ENCODE measurements at regions of chr9 and their contacts with region 1.

Region 1: DNA sequence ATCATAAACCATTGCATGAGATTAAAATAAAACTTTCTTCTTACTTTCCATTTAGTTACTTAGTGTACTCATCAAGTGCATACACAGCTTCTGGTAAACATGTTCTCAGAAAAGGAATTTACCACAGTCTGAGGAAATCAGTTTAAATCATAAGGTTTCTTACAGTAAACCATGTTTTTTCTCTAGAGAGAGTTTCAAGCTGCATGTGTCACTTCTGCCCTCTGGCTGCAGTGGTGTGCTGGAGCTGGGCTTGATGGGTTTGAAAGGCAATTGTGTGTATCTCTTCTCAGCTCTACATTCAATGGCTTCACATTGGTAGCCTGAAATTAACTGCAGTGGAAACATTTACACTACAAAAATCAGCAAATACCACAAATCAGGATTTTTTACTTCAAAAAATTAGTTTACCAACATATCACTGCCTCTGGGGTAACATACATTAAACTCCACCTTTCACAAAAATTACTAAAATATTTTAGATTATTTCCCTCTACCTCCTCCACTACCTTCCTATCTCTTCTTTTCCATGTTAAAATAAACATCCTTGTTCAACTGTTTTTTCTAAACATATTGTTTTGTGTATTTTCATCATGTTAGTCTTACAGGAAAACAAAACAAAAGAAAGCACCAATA is 414.3 kb downstream of the ANXA1 start:
- DNase-seq: no peak

Region 2: GRCh38 chr9:73200694-73201452 is 365.1 kb before region 1 on chr9:
- intact Hi-C with region 1: loop called (anchors 10 kb)
- DNase-seq: no peak

Region 3: GRCh38 chr9:73269430-73270101 is 296.4 kb before region 1 on chr9:
- intact Hi-C with region 1: loop called (anchors 5 kb)
- DNase-seq: no peak

Region 4: GRCh38 chr9:73280113-73280512 is 285.8 kb before region 1 on chr9:
- intact Hi-C with region 1: no loop called
- DNase-seq: no peak

Region 5: DNA sequence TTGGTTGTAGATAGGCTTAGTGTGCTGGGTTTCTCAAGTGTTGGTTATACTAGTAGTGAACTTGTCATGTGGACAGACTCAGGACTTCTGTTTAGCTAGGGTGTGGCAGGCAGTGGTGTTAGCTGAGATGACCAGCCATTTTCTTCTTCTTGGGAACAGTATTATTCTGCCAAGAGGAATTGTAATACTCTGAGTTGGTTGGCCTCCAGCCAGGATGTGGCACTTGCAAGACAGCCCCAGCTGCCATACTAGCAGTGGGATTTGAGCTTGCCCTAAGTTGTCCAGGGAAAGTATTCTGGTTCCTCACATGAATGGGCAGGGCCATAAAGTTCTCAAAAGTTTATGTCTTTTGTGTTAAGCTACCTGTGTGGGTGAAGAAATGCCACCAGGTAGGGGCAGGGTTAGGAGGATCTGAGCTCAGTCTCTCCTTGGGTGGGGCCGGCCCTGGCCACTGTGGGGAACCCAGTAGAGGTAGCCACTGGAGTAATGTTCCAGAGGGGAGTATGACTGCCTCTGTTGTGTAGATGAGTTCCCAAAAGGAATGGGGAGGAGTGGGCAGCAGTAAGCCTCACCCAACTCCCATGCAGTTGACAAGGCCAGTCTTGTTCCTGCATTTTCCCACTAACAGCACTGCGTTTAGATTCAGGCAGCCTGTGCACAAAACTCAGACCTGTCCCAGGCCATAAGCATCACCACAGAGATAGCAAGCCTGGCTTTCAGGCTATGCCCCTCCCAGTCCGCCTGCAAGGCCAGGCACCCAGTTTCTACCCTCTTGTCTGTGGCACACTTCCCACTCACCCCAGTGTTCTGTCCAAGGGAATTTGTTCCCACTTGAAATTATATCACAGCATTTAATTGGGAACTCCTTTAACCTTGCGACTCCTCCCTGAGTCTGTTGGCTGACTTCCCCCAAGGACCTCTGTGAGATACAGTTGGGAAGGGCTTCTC is 163.6 kb before region 1 on chr9:
- intact Hi-C with region 1: no loop called
- DNase-seq: no peak

Measured in cardiac septum (tissue), 1 donor.